PC-3 (cell line): ENCODE measurements at regions of chr10 and their contacts with region 1.

Region 1: DNA sequence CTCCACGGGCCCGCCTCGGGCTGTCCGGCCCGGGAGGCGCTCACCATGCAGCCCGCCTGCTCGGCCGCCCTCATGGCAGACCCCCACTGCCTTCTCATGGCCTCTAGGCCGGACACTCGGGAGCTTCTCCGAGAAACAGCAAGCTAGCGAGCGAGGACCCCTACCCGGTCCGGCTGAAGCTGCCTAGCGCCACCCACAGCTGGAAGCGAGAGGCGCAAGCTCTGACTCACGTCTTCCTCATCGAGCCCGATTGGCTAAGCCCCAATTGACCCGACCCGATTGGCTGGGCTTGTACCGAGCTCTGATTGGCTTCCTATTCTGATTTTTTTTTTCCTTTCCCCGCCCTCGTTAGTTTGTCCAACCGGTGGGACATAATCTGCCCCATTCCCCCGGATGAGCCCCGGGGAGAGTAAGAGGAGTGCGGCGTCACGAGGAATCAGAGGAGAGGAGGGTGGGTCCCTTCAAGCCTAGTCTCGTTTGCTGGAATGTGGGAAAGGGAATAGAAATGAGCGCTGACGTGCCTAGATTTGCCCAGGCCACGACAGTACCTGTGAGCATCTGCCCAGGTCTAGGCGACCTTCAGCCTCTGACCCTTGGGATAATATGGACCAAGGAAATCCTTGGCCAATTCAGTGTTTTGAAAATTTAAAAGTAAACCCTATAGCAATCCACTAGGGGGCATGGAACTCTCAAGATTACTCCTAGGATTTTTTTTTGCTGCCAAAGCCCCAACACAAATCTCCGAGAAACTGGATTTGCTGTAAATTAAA is at the start of gene TYSND1:
- DNase-seq: peak; percentile 100
- ATAC-seq: peak; percentile 75
- H3K4me3 ChIP-seq: peak within 1 kb of the TSS; percentile 72
- H3K27ac ChIP-seq: peak within 1 kb of the TSS; percentile 57
- H3K4me1 ChIP-seq: peaks cover 21% of the 10 kb centered on the region
- H3K27me3 ChIP-seq: no peaks in the 10 kb centered on the region
- CTCF ChIP-seq: peak; percentile 71
- total RNA-seq, gene TYSND1: 78.2 and 87.3 TPM in 2 replicates

Region 2: DNA sequence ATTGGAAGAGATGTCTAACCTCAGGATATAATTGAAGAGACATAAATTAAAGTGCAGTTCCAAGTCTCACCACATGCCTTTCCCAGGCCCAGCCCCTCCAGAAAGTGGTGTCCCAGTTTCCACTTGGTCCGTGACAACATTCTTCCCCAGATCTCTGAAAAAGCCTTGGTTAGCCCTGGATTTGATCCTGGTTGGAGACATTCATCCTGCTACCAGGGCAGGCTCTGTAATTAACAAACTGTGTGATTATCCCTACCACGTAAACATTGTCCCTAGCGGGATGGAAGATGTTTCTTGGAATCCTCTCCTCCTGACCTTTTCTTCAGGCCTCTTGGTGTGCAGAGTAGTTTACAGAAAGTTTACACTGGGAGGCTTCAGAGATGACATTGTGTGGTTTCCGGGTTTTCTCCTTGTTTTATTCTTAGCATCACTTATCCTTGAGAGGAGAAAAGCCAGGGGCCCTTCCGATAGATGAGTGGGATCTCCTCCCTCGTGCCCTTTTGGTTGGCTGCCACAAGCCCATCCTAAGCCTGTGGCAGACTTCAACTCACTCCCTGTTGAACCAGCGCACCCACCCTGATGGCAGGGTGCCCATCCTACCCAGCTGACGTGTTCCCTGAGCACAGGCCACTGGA is 261.2 kb before region 1 on chr10:
- CTCF ChIA-PET with region 1: no interaction called
- POLR2A ChIA-PET with region 1: no interaction called
- intact Hi-C with region 1: no loop called
- DNase-seq: peak; percentile 48
- ATAC-seq: peak; percentile 48; the same call in 1 of the 2 replicates
- H3K4me3 ChIP-seq: no peak overlapping the region
- H3K27ac ChIP-seq: no peak overlapping the region
- H3K4me1 ChIP-seq: no peaks in the 10 kb centered on the region
- H3K27me3 ChIP-seq: no peaks in the 10 kb centered on the region
- CTCF ChIP-seq: peak; percentile 64

Region 3: GRCh38 chr10:69968830-69969229 is 177.8 kb before region 1 on chr10:
- CTCF ChIA-PET with region 1: interaction called, 5 read pairs
- POLR2A ChIA-PET with region 1: interaction called, 4 read pairs
- intact Hi-C with region 1: loop called (anchors 1 kb)
- DNase-seq: peak; percentile 64
- ATAC-seq: peak; percentile 73
- H3K4me3 ChIP-seq: no peak overlapping the region
- H3K27ac ChIP-seq: no peak overlapping the region
- H3K4me1 ChIP-seq: no peaks in the 10 kb centered on the region; the same call in 1 of the 2 replicates
- H3K27me3 ChIP-seq: peaks cover 56% of the 10 kb centered on the region
- CTCF ChIP-seq: peak; percentile 77

Region 4: DNA sequence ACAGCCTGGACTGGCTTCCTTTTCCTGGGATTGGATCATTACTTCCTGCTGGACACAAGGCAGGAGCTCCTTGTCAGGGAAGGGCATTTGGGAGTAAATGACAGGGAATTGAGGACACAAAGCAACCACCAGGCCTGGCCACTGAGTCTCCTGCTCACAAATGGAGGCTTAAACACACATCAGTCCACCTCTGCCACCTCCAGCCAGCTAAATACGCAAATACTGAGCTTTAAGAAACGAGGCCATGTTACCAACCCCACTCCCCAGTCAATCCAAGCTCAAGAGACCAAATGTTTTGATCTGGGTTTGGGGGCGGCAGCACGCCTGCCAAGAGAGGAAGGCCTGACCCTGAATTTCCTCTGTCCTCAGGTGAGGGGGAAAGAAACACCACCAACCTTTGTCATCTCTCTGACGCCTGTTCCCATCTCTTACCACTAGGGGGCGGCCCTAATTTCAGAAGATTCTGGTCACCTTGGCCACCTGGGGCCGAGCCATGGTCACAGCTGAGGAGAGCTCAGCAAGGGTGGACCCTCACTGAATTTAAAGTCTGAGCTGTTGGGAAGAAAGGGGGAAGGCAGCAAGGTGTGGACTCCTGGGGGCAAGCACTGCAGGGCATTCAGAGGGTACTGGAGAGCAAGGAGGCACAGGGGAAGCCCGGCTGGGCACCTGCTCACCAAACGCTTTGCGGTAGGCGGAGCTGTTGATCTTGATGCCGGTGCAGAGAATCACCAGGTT is 30.6 kb before region 1 on chr10:
- CTCF ChIA-PET with region 1: interaction called, 50 read pairs
- POLR2A ChIA-PET with region 1: no interaction called
- intact Hi-C with region 1: loop called (anchors 1 kb)
- DNase-seq: peak; percentile 86
- ATAC-seq: peak; percentile 85
- H3K4me3 ChIP-seq: no peak overlapping the region
- H3K27ac ChIP-seq: no peak overlapping the region
- H3K4me1 ChIP-seq: no peaks in the 10 kb centered on the region
- H3K27me3 ChIP-seq: no peaks in the 10 kb centered on the region
- CTCF ChIP-seq: peak; percentile 100

Region 5: GRCh38 chr10:70169649-70170364 is 23.1 kb after region 1 on chr10:
- CTCF ChIA-PET with region 1: interaction called, 19 read pairs
- POLR2A ChIA-PET with region 1: interaction called, 40 read pairs
- intact Hi-C with region 1: loop called (anchors 1 kb)
- DNase-seq: no peak
- ATAC-seq: peak; percentile 21
- H3K4me3 ChIP-seq: peak overlapping the region; percentile 81
- H3K27ac ChIP-seq: peak overlapping the region; percentile 19
- H3K4me1 ChIP-seq: peaks cover 30% of the 10 kb centered on the region
- H3K27me3 ChIP-seq: no peaks in the 10 kb centered on the region
- CTCF ChIP-seq: no peak

Region 6: GRCh38 chr10:70197235-70197945 is 50.7 kb after region 1 on chr10:
- CTCF ChIA-PET with region 1: interaction called, 10 read pairs
- POLR2A ChIA-PET with region 1: interaction called, 3 read pairs
- intact Hi-C with region 1: loop called (anchors 2 kb)
- DNase-seq: no peak
- ATAC-seq: no peak
- H3K4me3 ChIP-seq: no peak overlapping the region
- H3K27ac ChIP-seq: no peak overlapping the region
- H3K4me1 ChIP-seq: peaks cover 8% of the 10 kb centered on the region
- H3K27me3 ChIP-seq: no peaks in the 10 kb centered on the region
- CTCF ChIP-seq: no peak

Region 7: DNA sequence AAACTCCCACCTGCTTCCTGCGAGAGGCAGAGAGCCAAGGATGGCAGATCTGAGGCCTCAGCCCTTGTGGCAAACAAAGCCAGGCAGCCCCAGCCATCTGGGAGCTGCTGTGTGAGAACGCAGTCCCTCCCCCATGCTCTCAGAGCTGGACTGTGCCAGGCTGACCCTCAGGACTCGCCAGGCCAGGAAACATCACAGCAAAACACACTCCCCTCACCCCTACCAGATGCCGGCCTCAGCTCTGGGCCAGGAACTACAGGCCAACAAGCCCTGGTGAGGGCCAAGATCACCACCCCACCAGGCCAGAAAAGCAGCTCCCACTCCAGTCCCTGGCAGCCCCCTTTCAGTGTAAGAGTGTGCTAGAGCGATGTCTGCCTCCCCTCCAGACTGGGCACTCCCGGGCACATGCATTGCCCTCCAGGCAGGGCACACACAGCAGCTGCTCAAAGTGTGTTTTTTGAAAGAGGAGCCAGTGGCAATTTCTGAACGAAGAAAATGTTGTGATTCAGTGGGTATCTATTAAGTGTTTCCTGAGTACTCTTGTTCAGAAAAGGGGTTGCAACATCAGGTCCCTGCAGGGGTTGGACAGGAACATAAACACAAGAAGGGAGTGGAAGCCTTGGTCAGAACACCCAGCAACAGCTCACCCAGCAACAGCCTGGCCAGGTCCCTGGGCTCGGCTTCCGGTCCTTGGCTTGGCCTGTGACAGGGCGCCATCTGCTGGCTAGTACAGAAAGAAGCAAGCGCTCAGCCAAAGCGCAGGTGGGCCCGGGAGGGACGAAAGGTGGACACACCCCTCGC is 217.5 kb after region 1 on chr10:
- CTCF ChIA-PET with region 1: interaction called, 16 read pairs
- POLR2A ChIA-PET with region 1: interaction called, 6 read pairs
- intact Hi-C with region 1: loop called (anchors 1 kb)
- DNase-seq: peak; percentile 98
- ATAC-seq: peak; percentile 97
- H3K4me3 ChIP-seq: peak overlapping the region; percentile 36; the same call in 1 of the 2 replicates
- H3K27ac ChIP-seq: peak overlapping the region; percentile 14
- H3K4me1 ChIP-seq: peaks cover 14% of the 10 kb centered on the region
- H3K27me3 ChIP-seq: no peaks in the 10 kb centered on the region
- CTCF ChIP-seq: peak; percentile 100

Region 8: DNA sequence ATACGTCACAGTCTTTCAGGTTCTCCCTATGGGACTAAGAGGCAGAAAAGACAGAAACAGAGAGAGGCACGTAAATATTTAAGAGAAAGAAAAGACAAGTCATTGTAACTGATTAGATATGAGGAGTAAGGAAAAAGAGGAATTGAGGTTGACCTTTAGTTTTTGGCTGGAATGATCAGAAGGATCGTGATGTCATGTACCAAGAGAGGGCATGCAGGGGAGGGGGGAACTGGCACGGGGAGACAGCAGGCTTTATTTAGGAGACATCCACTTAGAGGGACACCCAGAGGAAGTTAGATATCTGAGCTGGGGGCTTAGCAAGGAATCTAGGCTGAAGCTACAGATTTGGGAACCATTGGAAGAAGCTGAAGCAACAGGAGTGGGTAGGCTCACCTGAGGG is 245.0 kb after region 1 on chr10:
- CTCF ChIA-PET with region 1: interaction called, 22 read pairs
- POLR2A ChIA-PET with region 1: interaction called, 4 read pairs
- intact Hi-C with region 1: loop called (anchors 1 kb)
- DNase-seq: no peak
- ATAC-seq: no peak
- H3K4me3 ChIP-seq: no peak overlapping the region
- H3K27ac ChIP-seq: no peak overlapping the region
- H3K4me1 ChIP-seq: peaks cover 8% of the 10 kb centered on the region; the same call in 1 of the 2 replicates
- H3K27me3 ChIP-seq: no peaks in the 10 kb centered on the region
- CTCF ChIP-seq: no peak